Left cardiac atrium (tissue), 4 donors: ENCODE measurements at regions of chr3 and their contacts with region 1.

Region 1: GRCh38 chr3:183122257-183122932 is 23.1 kb upstream of the MCCC1 start:
- DNase-seq: no peak
- ATAC-seq: peak; percentile 35 to 68

Region 2: GRCh38 chr3:182755308-182755707 is 367.1 kb before region 1 on chr3:
- intact Hi-C with region 1: no loop called
- DNase-seq: no peak
- ATAC-seq: no peak

Region 3: GRCh38 chr3:183180105-183180783 is 57.8 kb after region 1 on chr3:
- intact Hi-C with region 1: loop called in 1 of 2 experiments (anchors 5 kb)
- DNase-seq: no peak
- ATAC-seq: no peak

Region 4: GRCh38 chr3:183385698-183386613 is 263.6 kb after region 1 on chr3:
- intact Hi-C with region 1: loop called (anchors 1 to 10 kb)
- DNase-seq: peak; percentile 34
- ATAC-seq: peak; percentile 84 to 86